SK-N-SH (cell line): ENCODE measurements at regions of chrX and their contacts with region 1.

Region 1: DNA sequence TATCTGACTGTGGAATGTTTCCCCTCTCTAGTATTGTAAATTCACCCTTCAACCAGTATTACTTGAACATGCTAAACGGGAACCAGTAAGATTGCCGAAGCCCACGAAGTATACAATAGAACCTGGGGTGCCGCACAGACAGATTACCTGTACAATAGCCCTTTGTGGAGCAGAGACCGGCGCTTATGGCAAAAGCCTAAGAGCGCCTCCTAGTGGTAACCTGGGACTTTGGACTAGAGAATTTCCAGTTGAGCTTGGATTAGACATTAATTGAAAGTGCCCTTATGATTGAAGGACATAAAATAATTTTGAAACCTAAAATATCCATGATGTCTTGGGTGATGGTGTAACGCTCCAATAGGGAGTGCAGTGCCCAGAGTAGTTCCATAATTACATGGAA is 14.1 kb downstream of the ZNF157 start:
- DNase-seq: peak; percentile 54
- H3K4me3 ChIP-seq: peak overlapping the region in 1 of 2 experiments; percentile 23; a peak in 1 of 4 replicates
- H3K27ac ChIP-seq: no peak overlapping the region
- H3K4me1 ChIP-seq: no peaks in the 10 kb centered on the region
- H3K27me3 ChIP-seq: no peaks in the 10 kb centered on the region; the same call in 1 of the 2 replicates
- CTCF ChIP-seq: peak; percentile 86
- EP300 ChIP-seq: no peak
- RAD21 ChIP-seq: peak; percentile 84

Region 2: GRCh38 chrX:47193475-47194193 is 190.9 kb before region 1 on chrX and contains the start of gene UBA1:
- CTCF ChIA-PET with region 1: interaction called, 29 read pairs
- POLR2A ChIA-PET with region 1: interaction called, 4 read pairs
- DNase-seq: peak; percentile 95
- H3K4me3 ChIP-seq: peak within 1 kb of the TSS; percentile 83 to 96
- H3K27ac ChIP-seq: peak within 1 kb of the TSS; percentile 89 to 93
- H3K4me1 ChIP-seq: peaks cover 16 to 36% of the 10 kb centered on the region in 2 experiments
- H3K27me3 ChIP-seq: no peaks in the 10 kb centered on the region
- CTCF ChIP-seq: peak; percentile 88
- EP300 ChIP-seq: no peak
- RAD21 ChIP-seq: peak; percentile 97
- polyA plus RNA-seq, gene UBA1: 249 and 283 TPM in 2 replicates

Region 3: DNA sequence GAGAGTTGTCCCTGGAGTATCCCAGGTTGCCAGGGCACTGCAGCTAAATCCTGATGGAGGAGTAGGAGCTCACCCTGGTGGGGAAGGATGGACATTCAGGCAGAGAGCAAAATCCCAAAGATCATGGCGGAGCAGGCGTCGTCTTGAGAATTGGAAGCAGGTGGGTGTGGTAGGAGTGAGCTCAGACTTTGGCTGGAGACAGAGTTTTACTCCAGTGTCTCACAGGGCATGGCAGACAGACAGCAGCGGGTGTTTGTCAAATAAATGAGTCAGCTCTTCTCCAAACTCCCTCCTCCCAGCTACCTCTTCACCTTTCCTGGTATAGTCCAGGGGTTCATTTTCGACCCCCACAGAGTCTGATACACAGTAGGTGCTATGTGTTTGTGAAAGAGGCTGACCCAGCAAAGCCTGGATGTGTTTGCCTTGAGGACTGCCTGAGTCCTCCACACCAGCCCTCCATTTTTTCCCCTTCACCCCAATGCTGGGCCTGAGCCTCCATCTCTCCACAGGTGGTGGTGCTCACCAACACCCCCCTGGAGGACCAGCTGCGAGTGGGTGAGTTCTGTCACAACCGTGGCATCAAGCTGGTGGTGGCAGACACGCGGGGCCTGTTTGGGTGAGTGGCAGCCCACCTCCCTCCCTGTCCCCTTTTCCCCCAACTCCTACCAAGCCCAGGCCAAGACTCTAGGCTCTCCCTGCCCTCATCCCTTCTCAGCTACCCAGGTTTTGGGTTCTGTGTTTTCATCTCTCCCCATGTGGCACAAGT is 183.9 kb before region 1 on chrX:
- CTCF ChIA-PET with region 1: interaction called, 14 read pairs
- POLR2A ChIA-PET with region 1: interaction called, 4 read pairs
- DNase-seq: no peak
- H3K4me3 ChIP-seq: no peak overlapping the region
- H3K27ac ChIP-seq: no peak overlapping the region
- H3K4me1 ChIP-seq: peaks cover 7 to 24% of the 10 kb centered on the region in 2 experiments
- H3K27me3 ChIP-seq: no peaks in the 10 kb centered on the region
- CTCF ChIP-seq: peak; percentile 21
- EP300 ChIP-seq: no peak
- RAD21 ChIP-seq: no peak